Dendritic cell treated with granulocyte-macrophage colony-stimulating factor and Interleukin-4, amounts not matched to agents 40 ng/mL and 50 ng/mL, for 4 days (primary cell): ENCODE measurements at regions of chr12 and their contacts with region 1.

Region 1: DNA sequence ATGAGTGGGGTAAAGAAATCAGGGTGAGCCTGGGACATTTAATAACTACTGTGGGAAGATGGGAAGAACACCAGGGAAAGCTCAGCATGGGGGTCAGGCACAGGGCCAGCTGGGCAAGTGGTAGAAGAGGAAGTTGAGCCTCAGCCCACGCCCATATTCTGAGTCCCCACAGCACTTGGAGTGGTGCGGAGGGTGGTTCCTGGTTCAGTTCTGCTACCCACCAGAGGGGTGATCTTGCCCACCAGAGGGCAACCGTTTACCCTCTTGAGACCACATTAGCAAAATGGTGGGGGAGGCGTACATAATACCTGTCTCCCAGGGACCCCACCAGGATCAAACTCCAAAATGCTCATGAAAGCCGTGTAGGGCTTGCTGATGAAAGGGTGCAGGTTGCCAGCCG is 16.8 kb upstream of the ANKRD33 start:
- H3K4me3 Mint-ChIP-seq: no peak overlapping the region
- H3K27ac Mint-ChIP-seq: no peak overlapping the region
- H3K4me1 Mint-ChIP-seq: peaks cover 55% of the 10 kb centered on the region
- H3K27me3 Mint-ChIP-seq: peaks cover 38% of the 10 kb centered on the region

Region 2: GRCh38 chr12:51823875-51824565 is 47.1 kb before region 1 on chr12:
- intact Hi-C with region 1: loop called (anchors 2 kb)
- H3K4me3 Mint-ChIP-seq: no peak overlapping the region
- H3K27ac Mint-ChIP-seq: no peak overlapping the region
- H3K4me1 Mint-ChIP-seq: peaks cover 68% of the 10 kb centered on the region
- H3K27me3 Mint-ChIP-seq: peaks cover 30% of the 10 kb centered on the region

Region 3: GRCh38 chr12:52327052-52327829 is 456.1 kb after region 1 on chr12:
- intact Hi-C with region 1: no loop called
- H3K4me3 Mint-ChIP-seq: no peak overlapping the region
- H3K27ac Mint-ChIP-seq: no peak overlapping the region
- H3K4me1 Mint-ChIP-seq: peaks cover 5% of the 10 kb centered on the region
- H3K27me3 Mint-ChIP-seq: peaks cover 46% of the 10 kb centered on the region